ENCODE measurements at regions of chr2 and their contacts with region 1.

Region 1: GRCh38 chr2:232113821-232114220 is 152.3 kb downstream of the DIS3L2 start:
- DNase-seq: no peak
- ATAC-seq: no peak

Region 2: GRCh38 chr2:232162186-232162585 is 48.4 kb after region 1 on chr2:
- intact Hi-C with region 1: no loop called
- DNase-seq: no peak
- ATAC-seq: no peak

Region 3: DNA sequence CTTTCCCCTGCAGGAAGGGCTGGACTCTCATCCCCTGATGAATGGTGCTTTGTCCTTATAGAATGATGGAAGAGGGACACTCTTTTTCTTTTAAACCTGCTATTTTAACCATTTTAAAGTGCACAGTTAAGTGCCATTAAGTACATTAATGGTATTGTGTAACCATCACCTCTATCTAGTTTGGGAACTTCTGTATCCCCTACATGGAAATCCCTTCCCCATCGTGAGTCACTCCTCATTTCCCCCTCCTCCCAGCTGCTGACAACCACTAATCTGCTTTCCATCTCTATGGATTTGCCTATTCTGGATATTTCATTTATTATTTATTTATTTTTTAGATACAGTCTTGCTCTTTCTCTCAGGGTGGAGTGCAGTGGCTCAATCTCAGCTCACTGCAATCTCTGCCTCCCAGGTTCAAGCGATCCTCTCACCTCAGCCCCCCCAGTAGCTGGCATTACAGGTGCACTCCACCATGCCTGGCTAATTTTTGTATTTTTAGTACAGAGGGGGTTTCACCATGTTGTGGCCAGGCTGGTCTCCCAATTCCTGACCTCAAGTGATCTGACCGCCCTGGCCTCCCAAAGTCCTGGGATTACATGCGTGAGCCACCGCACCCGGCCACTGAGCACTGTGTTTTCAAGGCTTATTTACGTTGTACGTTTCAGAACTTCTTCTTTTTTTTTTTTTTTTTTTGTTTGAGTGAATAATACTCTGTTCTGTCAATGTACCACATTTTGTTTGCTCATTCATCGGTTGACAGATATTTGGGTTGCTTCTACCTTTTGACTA is 1256.3 kb after region 1 on chr2:
- intact Hi-C with region 1: loop called (anchors 5 kb)
- DNase-seq: no peak
- ATAC-seq: no peak

Measured in sciatic nerve (tissue), 2 donors.